PC-9 (cell line): ENCODE measurements at regions of chr7 and their contacts with region 1.

Region 1: DNA sequence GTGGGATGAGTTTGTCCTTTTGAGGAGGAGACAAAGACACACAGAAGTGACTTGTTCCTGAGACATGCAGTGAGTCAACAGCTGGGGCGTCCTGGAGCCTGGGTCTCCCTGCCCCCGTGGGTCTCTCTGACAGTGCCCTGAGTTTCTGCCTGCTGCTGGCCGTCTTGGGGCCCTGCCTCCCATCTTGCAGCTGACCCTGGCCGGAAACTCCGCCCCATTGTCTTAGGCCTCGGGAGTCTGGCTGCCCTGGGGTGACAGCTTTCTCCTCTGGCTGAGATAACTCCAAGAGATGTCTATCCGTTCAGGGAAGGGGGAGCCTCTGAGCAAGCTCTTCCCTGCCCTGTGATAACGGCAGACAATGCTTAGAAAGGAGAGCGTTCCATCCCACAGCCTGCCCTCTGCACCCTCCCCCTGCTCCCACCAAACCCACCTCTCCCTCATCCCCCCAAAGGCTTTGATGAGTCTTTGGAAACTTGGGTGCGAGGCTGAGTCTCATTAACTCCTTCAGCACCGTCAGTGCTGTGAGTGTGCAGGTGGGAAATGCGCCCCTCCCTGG is 69.5 kb upstream of the PODXL start:
- DNase-seq: peak; percentile 92 to 96
- H3K4me3 ChIP-seq: peak overlapping the region; percentile 18; the same call in 1 of the 2 replicates
- H3K27ac ChIP-seq: peak overlapping the region; percentile 87
- H3K4me1 ChIP-seq: peaks cover 66% of the 10 kb centered on the region
- H3K27me3 ChIP-seq: no peaks in the 10 kb centered on the region
- CTCF ChIP-seq: no peak

Region 2: GRCh38 chr7:130951976-130952876 is 673.7 kb before region 1 on chr7:
- CTCF ChIA-PET with region 1: no interaction called
- POLR2A ChIA-PET with region 1: interaction called, 13 read pairs
- intact Hi-C with region 1: no loop called
- DNase-seq: no peak
- H3K4me3 ChIP-seq: no peak overlapping the region
- H3K27ac ChIP-seq: no peak overlapping the region; the same call in 1 of the 2 replicates
- H3K4me1 ChIP-seq: 0 out of 2 replicates have a peak, but pooled peaks cover 8% of the 10 kb centered on the region
- H3K27me3 ChIP-seq: no peaks in the 10 kb centered on the region
- CTCF ChIP-seq: no peak

Region 3: GRCh38 chr7:131497454-131497853 is 128.4 kb before region 1 on chr7:
- CTCF ChIA-PET with region 1: no interaction called
- POLR2A ChIA-PET with region 1: interaction called, 20 read pairs
- intact Hi-C with region 1: no loop called
- DNase-seq: no peak
- H3K4me3 ChIP-seq: no peak overlapping the region
- H3K27ac ChIP-seq: no peak overlapping the region
- H3K4me1 ChIP-seq: no peaks in the 10 kb centered on the region
- H3K27me3 ChIP-seq: no peaks in the 10 kb centered on the region
- CTCF ChIP-seq: no peak

Region 4: DNA sequence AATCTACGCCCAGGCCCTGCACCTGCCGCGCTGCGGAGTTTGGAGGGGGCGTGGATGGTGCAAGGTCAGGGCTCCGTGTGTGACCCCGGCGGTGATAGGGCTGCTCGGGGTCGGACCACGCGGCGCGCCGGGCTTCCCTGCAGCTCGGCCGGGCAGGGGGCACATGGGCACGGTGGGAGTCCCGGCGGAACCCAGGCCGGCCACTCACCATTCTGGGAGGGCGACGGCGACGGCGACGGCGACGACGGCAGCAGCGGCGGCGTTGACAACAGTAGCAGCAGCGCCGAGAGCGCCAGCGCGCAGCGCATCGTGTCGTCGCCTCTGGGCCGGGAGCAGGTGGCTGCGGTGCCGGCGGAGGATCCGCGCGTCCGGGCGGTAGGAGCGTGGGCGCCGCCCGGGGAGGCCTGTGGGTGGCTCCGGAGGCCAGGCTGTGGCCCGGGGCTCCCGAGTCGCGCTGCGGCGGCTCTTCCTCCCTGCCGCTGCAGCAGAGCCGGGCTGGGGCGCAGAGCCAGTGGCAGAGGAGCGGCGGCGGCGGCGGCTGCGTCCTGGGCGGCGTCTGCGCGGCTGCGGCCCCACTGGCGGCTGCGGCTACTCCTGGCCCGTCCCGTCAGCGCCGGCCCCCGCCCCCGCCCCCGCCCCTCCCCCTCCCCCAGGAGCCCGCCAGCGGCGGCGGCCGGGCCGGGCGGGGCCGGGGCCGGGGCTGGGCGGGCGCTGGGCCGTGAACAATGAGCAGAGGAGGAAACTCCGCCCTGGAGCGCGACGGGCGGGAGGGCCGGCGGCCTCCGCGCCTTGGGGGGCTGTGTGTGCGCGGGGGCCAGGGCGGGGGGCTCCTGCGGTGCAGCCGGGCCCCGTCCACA is 69.6 kb before region 1 on chr7 and contains the start of gene PODXL:
- CTCF ChIA-PET with region 1: no interaction called
- POLR2A ChIA-PET with region 1: interaction called, 10 read pairs
- intact Hi-C with region 1: loop called (anchors 5 kb)
- DNase-seq: peak in 1 of 2 experiments; percentile 87
- H3K4me3 ChIP-seq: peak within 1 kb of the TSS; percentile 75
- H3K27ac ChIP-seq: no peak within 1 kb of the TSS
- H3K4me1 ChIP-seq: peaks cover 42% of the 10 kb centered on the region
- H3K27me3 ChIP-seq: no peaks in the 10 kb centered on the region
- CTCF ChIP-seq: no peak
- total RNA-seq, gene PODXL: 57.5 and 75.3 TPM in 2 replicates

Region 5: DNA sequence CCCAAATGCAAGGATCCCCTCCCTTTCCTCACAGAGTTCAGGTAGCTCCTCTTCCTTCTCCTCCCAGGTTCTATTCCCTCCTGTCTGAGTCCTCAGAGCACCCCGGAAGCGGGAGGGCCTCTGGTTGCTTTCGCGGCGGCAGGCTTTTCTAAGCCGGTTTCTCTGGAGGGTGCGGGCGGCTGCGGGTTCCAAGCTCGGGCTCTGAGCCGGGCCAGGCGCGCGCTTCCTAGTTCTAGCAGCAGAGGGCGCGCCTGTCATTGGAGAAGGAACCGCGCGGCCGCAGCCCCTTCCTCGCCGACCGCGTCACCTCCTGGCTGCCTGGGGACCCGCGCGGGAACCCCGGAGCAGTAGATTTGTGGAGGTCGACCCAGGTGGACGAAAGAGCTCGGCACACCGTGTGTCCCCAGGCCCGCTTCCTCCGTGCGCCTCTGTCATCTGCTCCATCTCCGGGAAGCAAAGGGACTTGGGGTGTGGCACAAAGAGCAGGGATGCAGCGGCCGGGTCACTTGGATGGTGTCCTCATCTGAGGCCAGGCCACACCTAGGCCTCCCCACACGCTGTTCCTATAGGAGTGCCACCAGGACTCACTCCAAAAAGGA is 319.5 kb after region 1 on chr7:
- CTCF ChIA-PET with region 1: no interaction called
- POLR2A ChIA-PET with region 1: no interaction called
- intact Hi-C with region 1: no loop called
- DNase-seq: peak in 1 of 2 experiments; percentile 58
- H3K4me3 ChIP-seq: peak overlapping the region; percentile 18; the same call in 1 of the 2 replicates
- H3K27ac ChIP-seq: no peak overlapping the region
- H3K4me1 ChIP-seq: 0 out of 2 replicates have a peak, but pooled peaks cover 11% of the 10 kb centered on the region
- H3K27me3 ChIP-seq: peaks cover 49% of the 10 kb centered on the region
- CTCF ChIP-seq: peak; percentile 95

Region 6: DNA sequence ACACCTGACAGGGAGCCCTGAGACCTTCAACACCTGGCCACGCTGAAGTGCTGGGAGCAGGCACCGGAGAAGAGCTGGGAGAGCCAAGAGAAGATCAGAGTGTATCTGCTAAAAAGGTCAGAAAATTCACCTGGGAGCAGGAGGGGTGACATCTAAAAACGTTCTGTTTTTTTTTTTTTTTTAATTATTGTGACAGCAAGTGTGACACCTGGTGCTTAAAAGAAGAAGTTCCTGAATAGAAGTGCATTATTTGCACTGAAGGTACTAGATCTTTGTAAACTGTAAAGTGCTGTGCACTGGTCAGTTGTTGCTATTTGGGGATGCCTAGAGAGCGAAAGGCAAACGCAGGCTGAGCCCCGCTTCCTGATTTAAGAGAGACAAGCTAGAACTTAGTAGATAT is 528.4 kb after region 1 on chr7:
- CTCF ChIA-PET with region 1: no interaction called
- POLR2A ChIA-PET with region 1: interaction called, 13 read pairs
- intact Hi-C with region 1: no loop called
- DNase-seq: peak in 1 of 2 experiments; percentile 15
- H3K4me3 ChIP-seq: no peak overlapping the region
- H3K27ac ChIP-seq: no peak overlapping the region
- H3K4me1 ChIP-seq: no peaks in the 10 kb centered on the region
- H3K27me3 ChIP-seq: peaks cover 41% of the 10 kb centered on the region
- CTCF ChIP-seq: peak; percentile 62